HEK293T (cell line): ENCODE measurements at regions of chr6 and their contacts with region 1.

Region 1: GRCh38 chr6:117449549-117450439 is 24.1 kb upstream of the ROS1 start:
- DNase-seq: peak; percentile 48

Region 2: DNA sequence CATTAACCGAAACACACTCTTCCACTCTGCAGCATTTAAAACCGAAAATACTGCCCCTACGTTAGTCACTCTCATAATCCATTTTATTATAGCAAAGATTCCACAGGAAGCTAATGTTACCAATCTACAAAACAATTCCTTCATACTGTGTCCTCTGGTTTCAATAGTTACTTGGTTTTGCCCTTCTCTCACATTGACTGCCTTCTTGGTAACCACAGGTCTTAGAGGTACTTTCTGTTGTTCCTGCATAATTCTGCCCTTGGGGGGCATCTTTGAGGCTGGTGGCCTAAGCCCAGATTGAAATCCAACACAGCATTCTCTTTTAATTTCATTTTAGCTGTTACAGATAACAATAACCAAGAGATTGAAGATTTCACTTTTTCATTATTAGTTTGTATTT is 22.9 kb after region 1 on chr6:
- CTCF ChIA-PET with region 1: no interaction called
- POLR2A ChIA-PET with region 1: no interaction called
- DNase-seq: no peak

Region 3: GRCh38 chr6:117552618-117553017 is 102.8 kb after region 1 on chr6:
- CTCF ChIA-PET with region 1: interaction called, 11 read pairs
- POLR2A ChIA-PET with region 1: no interaction called
- DNase-seq: no peak